ENCODE measurements at regions of chr12 and their contacts with region 1.

Region 1: GRCh38 chr12:751192-751998 is 984 bp upstream of the WNK1 start:
- DNase-seq: peak; percentile 96 to 98
- ATAC-seq: peak; percentile 84
- H3K4me3 ChIP-seq: peak overlapping the region; percentile 13 to 30
- H3K27ac ChIP-seq: peak overlapping the region; percentile 9 to 49
- H3K4me1 ChIP-seq: no peaks in the 10 kb centered on the region
- H3K27me3 ChIP-seq: no peaks in the 10 kb centered on the region

Region 2: GRCh38 chr12:480831-481816 is 270.3 kb before region 1 on chr12:
- intact Hi-C with region 1: no loop called
- DNase-seq: peak; percentile 91 to 92
- ATAC-seq: peak; percentile 93
- H3K4me3 ChIP-seq: no peak overlapping the region
- H3K27ac ChIP-seq: peak overlapping the region; percentile 93 to 95
- H3K4me1 ChIP-seq: no peaks in the 10 kb centered on the region
- H3K27me3 ChIP-seq: no peaks in the 10 kb centered on the region

Region 3: DNA sequence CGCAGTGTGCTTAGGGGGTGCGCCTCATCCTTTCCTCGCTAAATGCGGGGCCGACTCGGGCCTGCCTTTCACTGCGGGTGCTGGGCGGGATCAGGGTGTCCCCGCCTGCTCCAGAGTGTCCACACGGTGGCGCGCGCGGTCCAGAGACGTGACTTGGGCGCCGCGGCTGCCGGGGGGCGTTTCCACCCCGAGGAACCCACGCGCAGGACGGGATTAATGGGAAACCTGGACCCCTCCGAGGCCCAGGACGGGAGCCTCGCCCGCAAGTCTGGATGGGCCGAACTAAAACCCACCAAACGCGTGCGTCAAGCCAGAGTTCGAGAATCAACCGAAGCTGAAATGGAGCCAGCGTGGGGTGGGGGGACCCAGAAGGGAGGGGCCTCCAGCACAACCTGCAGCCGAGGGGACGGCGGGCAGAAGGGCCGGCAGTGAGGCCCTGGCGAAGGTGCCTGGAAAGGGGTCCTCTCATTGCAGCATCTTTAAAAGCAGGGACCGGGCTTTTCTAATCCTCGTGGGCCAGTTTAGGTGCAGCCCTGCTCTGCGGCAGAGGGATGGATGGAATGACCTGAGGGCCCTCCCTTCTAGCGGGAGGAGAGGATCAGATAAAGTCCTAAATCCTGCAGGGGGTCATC is 181.5 kb before region 1 on chr12:
- intact Hi-C with region 1: loop called (anchors 2 kb)
- DNase-seq: peak; percentile 93 to 98
- ATAC-seq: peak; percentile 94
- H3K4me3 ChIP-seq: peak overlapping the region; percentile 30 to 57
- H3K27ac ChIP-seq: peak overlapping the region in 1 of 2 donors; percentile 62
- H3K4me1 ChIP-seq: no peaks in the 10 kb centered on the region
- H3K27me3 ChIP-seq: no peaks in the 10 kb centered on the region

Region 4: DNA sequence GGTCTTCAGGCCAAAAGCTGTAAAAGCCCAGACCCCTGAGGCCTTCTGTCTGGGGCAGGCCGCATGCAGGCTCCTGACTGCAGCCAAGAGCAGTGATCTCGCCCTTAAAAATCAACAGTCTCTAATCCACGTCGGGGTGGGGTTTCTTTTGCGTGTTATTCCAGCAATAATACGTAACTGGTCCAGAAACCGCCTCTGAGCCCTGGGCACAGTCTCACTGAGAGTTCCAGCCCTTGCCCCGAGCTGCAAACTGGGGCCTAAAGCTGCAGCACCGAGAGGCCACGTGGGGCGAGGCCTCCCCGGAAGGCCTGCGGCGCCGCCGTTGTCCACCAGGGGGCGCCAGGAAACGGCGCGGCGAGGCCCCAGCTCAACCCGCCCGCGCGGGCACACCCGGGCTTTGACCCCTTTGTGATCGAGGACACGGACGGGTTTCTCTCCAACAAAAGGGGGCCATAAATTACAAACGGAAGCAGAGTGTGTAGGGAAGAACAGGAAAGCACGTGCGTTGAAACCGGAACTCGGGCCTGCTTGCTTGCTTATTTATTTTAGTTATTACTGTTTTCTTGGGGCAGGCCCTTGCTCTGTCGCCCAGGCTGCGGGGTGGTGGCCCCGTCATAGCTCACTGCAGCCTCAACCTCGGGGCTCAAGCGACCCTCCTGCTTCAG is 175.3 kb before region 1 on chr12:
- intact Hi-C with region 1: loop called (anchors 2 kb)
- DNase-seq: peak; percentile 88 to 95
- ATAC-seq: peak; percentile 92
- H3K4me3 ChIP-seq: no peak overlapping the region
- H3K27ac ChIP-seq: peak overlapping the region in 1 of 2 donors; percentile 58
- H3K4me1 ChIP-seq: no peaks in the 10 kb centered on the region
- H3K27me3 ChIP-seq: no peaks in the 10 kb centered on the region

Region 5: GRCh38 chr12:645563-646071 is 105.8 kb before region 1 on chr12:
- intact Hi-C with region 1: loop called in 1 of 2 experiments (anchors 5 kb)
- DNase-seq: peak in 1 of 2 donors; percentile 70
- ATAC-seq: peak; percentile 57
- H3K4me3 ChIP-seq: no peak overlapping the region
- H3K27ac ChIP-seq: peak overlapping the region; percentile 6 to 81
- H3K4me1 ChIP-seq: peaks cover 0 to 4% of the 10 kb centered on the region in 2 donors
- H3K27me3 ChIP-seq: no peaks in the 10 kb centered on the region

Region 6: DNA sequence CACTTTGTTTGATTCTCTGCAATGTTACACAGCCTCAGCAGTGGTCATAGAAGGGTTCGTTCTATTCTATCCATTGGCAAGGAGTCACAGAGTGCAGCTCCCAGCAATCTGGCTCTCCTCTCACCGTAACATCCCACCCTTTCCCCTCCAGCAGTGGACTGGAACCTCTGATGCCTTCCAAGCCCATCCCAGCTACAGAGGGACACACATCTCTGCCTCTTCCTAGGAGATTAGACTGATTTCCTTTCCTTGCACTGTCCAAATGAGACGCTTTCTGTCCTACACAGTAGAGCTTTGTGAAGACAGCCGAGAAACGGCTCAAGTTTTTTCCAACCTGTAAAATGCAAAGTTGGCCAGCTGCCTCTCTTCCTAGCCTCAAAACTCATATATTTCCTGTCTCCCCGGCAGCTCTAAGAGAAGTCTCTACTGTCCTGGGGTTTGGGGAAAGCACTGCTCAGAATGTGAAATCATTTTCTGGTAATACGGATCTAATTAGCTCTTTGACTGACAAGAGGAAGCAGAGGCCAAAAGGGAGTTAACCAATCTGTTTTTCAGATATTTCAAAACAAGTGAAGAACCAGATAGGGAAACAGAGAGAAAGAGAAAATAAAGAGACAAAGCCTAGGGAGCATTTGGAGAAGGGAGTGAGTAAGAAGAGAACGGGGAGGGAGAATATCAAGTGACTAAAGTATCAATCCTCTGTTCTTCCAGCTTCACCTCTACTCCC is 88.7 kb before region 1 on chr12:
- intact Hi-C with region 1: loop called in 1 of 2 experiments (anchors 10 kb)
- DNase-seq: no peak
- ATAC-seq: peak; percentile 43
- H3K4me3 ChIP-seq: peak overlapping the region in 1 of 2 donors; percentile 9
- H3K27ac ChIP-seq: no peak overlapping the region
- H3K4me1 ChIP-seq: peaks cover 0 to 2% of the 10 kb centered on the region in 2 donors
- H3K27me3 ChIP-seq: no peaks in the 10 kb centered on the region

Region 7: GRCh38 chr12:712172-712863 is 39.1 kb before region 1 on chr12:
- intact Hi-C with region 1: no loop called
- DNase-seq: no peak
- ATAC-seq: no peak
- H3K4me3 ChIP-seq: no peak overlapping the region
- H3K27ac ChIP-seq: no peak overlapping the region
- H3K4me1 ChIP-seq: no peaks in the 10 kb centered on the region
- H3K27me3 ChIP-seq: no peaks in the 10 kb centered on the region

Region 8: GRCh38 chr12:810671-811415 is 59.4 kb after region 1 on chr12:
- intact Hi-C with region 1: loop called (anchors 5 kb)
- DNase-seq: no peak
- ATAC-seq: no peak
- H3K4me3 ChIP-seq: no peak overlapping the region
- H3K27ac ChIP-seq: no peak overlapping the region
- H3K4me1 ChIP-seq: no peaks in the 10 kb centered on the region
- H3K27me3 ChIP-seq: no peaks in the 10 kb centered on the region

Measured in aorta (tissue), 5 donors.